ENCODE measurements at regions of chr1 and their contacts with region 1.

Region 1: GRCh38 chr1:236416165-236416564 is 22.1 kb downstream of the EDARADD start:
- DNase-seq: peak in 8 of 9 donors; percentile 13 to 75 (median 55)
- ATAC-seq: peak; percentile 94
- H3K4me3 ChIP-seq: peak overlapping the region; percentile 41
- H3K4me3 Mint-ChIP-seq: peak overlapping the region; percentile 13 to 77 (median 62)
- H3K27ac ChIP-seq: peak overlapping the region; percentile 52
- H3K27ac Mint-ChIP-seq: peak overlapping the region; percentile 73 to 95 (median 81)
- H3K4me1 ChIP-seq: peaks cover 11 to 26% of the 10 kb centered on the region in 2 donors
- H3K4me1 Mint-ChIP-seq: peaks cover 8 to 17% (median 10%) of the 10 kb centered on the region in 7 donors
- H3K27me3 ChIP-seq: no peaks in the 10 kb centered on the region
- H3K27me3 Mint-ChIP-seq: no peaks in the 10 kb centered on the region

Region 2: GRCh38 chr1:236239092-236239585 is 177.0 kb before region 1 on chr1:
- CTCF ChIA-PET with region 1: no interaction called
- POLR2A ChIA-PET with region 1: no interaction called
- intact Hi-C with region 1: no loop called
- DNase-seq: no peak
- ATAC-seq: no peak
- H3K4me3 ChIP-seq: no peak overlapping the region
- H3K4me3 Mint-ChIP-seq: no peak overlapping the region
- H3K27ac ChIP-seq: no peak overlapping the region
- H3K27ac Mint-ChIP-seq: no peak overlapping the region
- H3K4me1 ChIP-seq: no peaks in the 10 kb centered on the region
- H3K4me1 Mint-ChIP-seq: peaks cover 0 to 3% (median 0%) of the 10 kb centered on the region in 7 donors
- H3K27me3 ChIP-seq: no peaks in the 10 kb centered on the region
- H3K27me3 Mint-ChIP-seq: no peaks in the 10 kb centered on the region

Region 3: DNA sequence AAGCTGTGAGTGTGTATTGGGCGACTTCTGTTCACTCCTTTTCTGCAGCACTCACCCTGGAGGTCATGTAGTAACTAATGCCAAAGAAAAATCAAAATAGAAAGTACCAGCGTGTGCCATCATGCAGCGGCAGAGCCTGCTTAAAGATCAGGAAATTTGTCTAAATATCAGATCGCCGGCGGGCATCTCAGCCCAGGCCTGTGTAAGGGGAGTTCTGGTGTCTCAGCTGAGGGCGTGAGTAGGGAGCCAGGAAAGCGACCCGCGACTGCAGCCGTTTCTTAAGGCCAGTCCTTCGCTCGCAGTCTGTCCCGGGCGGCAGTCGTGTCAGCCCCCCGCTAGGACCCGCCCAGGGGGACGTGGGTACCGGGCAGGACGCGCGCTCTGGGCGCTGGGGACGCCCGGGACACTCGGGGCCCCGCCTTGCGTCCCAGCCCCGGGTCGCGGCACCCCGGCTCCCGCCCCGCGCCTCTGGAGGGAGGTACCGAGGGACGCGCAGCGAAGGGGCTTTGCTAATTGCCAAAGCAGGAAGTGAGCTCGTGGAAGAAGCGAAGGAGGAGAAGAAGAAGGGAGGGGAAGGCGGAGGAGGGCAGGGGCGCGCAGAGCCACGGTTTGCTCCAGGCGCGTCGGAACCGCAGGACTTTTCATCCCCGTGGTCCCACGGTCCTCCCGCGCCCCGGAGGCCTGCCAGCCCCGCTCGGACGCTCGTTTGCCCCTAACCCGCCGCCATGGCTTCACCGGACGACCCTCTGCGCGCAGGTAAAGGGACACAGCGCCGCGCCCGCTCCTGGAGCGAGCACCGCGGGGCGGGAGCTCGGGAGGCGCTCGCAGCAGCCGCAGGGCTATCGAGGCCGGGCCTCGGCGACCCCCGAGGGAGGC is 21.0 kb before region 1 on chr1:
- CTCF ChIA-PET with region 1: interaction called, 4 read pairs
- POLR2A ChIA-PET with region 1: no interaction called
- intact Hi-C with region 1: loop called in 1 of 2 experiments (anchors 1 kb)
- DNase-seq: peak in 3 of 9 donors; percentile 13 to 62 (median 29)
- ATAC-seq: peak; percentile 75
- H3K4me3 ChIP-seq: peak overlapping the region; percentile 70
- H3K4me3 Mint-ChIP-seq: peak overlapping the region; percentile 70 to 96 (median 86)
- H3K27ac ChIP-seq: no peak overlapping the region
- H3K27ac Mint-ChIP-seq: peak overlapping the region in 1 of 9 donors; percentile 86
- H3K4me1 ChIP-seq: peaks cover 3 to 10% of the 10 kb centered on the region in 2 donors
- H3K4me1 Mint-ChIP-seq: peaks cover 15 to 43% (median 22%) of the 10 kb centered on the region in 7 donors
- H3K27me3 ChIP-seq: peaks cover 0 to 5% of the 10 kb centered on the region in 2 donors
- H3K27me3 Mint-ChIP-seq: peaks cover 27 to 67% (median 51%) of the 10 kb centered on the region in 5 donors

Measured in naive thymus-derived CD4-positive, alpha-beta T cell (primary cell).